Activated B cell treated with CpG ODN at 0.5 μM for 24 hours (primary cell): ENCODE measurements at regions of chr20 and their contacts with region 1.

Region 1: GRCh38 chr20:3811467-3812258 is 8.7 kb upstream of the AP5S1 start:
- DNase-seq: peak; percentile 55
- ATAC-seq: peak; percentile 99
- H3K4me3 Mint-ChIP-seq: peak overlapping the region; percentile 85
- H3K27ac Mint-ChIP-seq: peak overlapping the region; percentile 81
- H3K4me1 Mint-ChIP-seq: peaks cover 17% of the 10 kb centered on the region
- H3K27me3 Mint-ChIP-seq: no peaks in the 10 kb centered on the region
- CTCF ChIP-seq: no peak

Region 2: GRCh38 chr20:3795511-3796468 is 15.9 kb before region 1 on chr20 and contains the start of gene CDC25B:
- CTCF ChIA-PET with region 1: no interaction called
- POLR2A ChIA-PET with region 1: interaction called, 11 read pairs
- intact Hi-C with region 1: loop called (anchors 1 kb)
- DNase-seq: peak; percentile 75
- ATAC-seq: peak; percentile 84
- H3K4me3 Mint-ChIP-seq: peak within 1 kb of the TSS; percentile 92
- H3K27ac Mint-ChIP-seq: peak within 1 kb of the TSS; percentile 95
- H3K4me1 Mint-ChIP-seq: peaks cover 50% of the 10 kb centered on the region
- H3K27me3 Mint-ChIP-seq: no peaks in the 10 kb centered on the region
- CTCF ChIP-seq: no peak
- total RNA-seq, gene CDC25B: 21.6 and 24.3 TPM in 2 replicates

Region 3: GRCh38 chr20:4045741-4046140 is 234.1 kb after region 1 on chr20:
- CTCF ChIA-PET with region 1: no interaction called
- POLR2A ChIA-PET with region 1: no interaction called
- intact Hi-C with region 1: no loop called
- DNase-seq: no peak
- ATAC-seq: no peak
- H3K4me3 Mint-ChIP-seq: no peak overlapping the region
- H3K27ac Mint-ChIP-seq: no peak overlapping the region
- H3K4me1 Mint-ChIP-seq: no peaks in the 10 kb centered on the region
- H3K27me3 Mint-ChIP-seq: peaks cover 10% of the 10 kb centered on the region
- CTCF ChIP-seq: no peak